ENCODE measurements at regions of chr3 and their contacts with region 1.

Region 1: GRCh38 chr3:42749753-42750231 is 23.3 kb downstream of the CCDC13 start:
- DNase-seq: peak; percentile 33
- H3K4me3 Mint-ChIP-seq: no peak overlapping the region
- H3K27ac Mint-ChIP-seq: no peak overlapping the region
- H3K4me1 Mint-ChIP-seq: peaks cover 8% of the 10 kb centered on the region
- H3K27me3 Mint-ChIP-seq: no peaks in the 10 kb centered on the region
- CTCF ChIP-seq: peak; percentile 50

Region 2: GRCh38 chr3:42581709-42582473 is 167.9 kb before region 1 on chr3 and contains the start of gene SEC22C:
- CTCF ChIA-PET with region 1: interaction called, 8 read pairs
- POLR2A ChIA-PET with region 1: interaction called, 5 read pairs
- intact Hi-C with region 1: loop called (anchors 2 kb)
- DNase-seq: peak; percentile 96
- H3K4me3 Mint-ChIP-seq: peak within 1 kb of the TSS; percentile 78
- H3K27ac Mint-ChIP-seq: peak within 1 kb of the TSS; percentile 66
- H3K4me1 Mint-ChIP-seq: peaks cover 29% of the 10 kb centered on the region
- H3K27me3 Mint-ChIP-seq: no peaks in the 10 kb centered on the region
- CTCF ChIP-seq: peak; percentile 20
- total RNA-seq, gene SEC22C: 52.1 and 55.7 TPM in 2 replicates

Region 3: GRCh38 chr3:42590989-42591756 is 158.6 kb before region 1 on chr3:
- CTCF ChIA-PET with region 1: interaction called, 11 read pairs
- POLR2A ChIA-PET with region 1: interaction called, 3 read pairs
- intact Hi-C with region 1: no loop called
- DNase-seq: no peak
- H3K4me3 Mint-ChIP-seq: peak overlapping the region; percentile 83
- H3K27ac Mint-ChIP-seq: peak overlapping the region; percentile 52
- H3K4me1 Mint-ChIP-seq: peaks cover 14% of the 10 kb centered on the region
- H3K27me3 Mint-ChIP-seq: no peaks in the 10 kb centered on the region
- CTCF ChIP-seq: no peak

Region 4: GRCh38 chr3:42652611-42653302 is 97.0 kb before region 1 on chr3:
- CTCF ChIA-PET with region 1: interaction called, 27 read pairs
- POLR2A ChIA-PET with region 1: interaction called, 5 read pairs
- intact Hi-C with region 1: loop called (anchors 1 kb)
- DNase-seq: peak; percentile 88
- H3K4me3 Mint-ChIP-seq: peak overlapping the region; percentile 90
- H3K27ac Mint-ChIP-seq: peak overlapping the region; percentile 89
- H3K4me1 Mint-ChIP-seq: peaks cover 41% of the 10 kb centered on the region
- H3K27me3 Mint-ChIP-seq: no peaks in the 10 kb centered on the region
- CTCF ChIP-seq: no peak

Region 5: GRCh38 chr3:42763021-42763420 is 13.2 kb after region 1 on chr3:
- CTCF ChIA-PET with region 1: interaction called, 7 read pairs
- POLR2A ChIA-PET with region 1: interaction called, 11 read pairs
- intact Hi-C with region 1: no loop called
- DNase-seq: no peak
- H3K4me3 Mint-ChIP-seq: no peak overlapping the region
- H3K27ac Mint-ChIP-seq: no peak overlapping the region
- H3K4me1 Mint-ChIP-seq: peaks cover 13% of the 10 kb centered on the region
- H3K27me3 Mint-ChIP-seq: no peaks in the 10 kb centered on the region
- CTCF ChIP-seq: no peak

Region 6: GRCh38 chr3:42831321-42831713 is 81.5 kb after region 1 on chr3:
- CTCF ChIA-PET with region 1: interaction called, 6 read pairs
- POLR2A ChIA-PET with region 1: no interaction called
- intact Hi-C with region 1: loop called (anchors 2 kb)
- DNase-seq: peak; percentile 78
- H3K4me3 Mint-ChIP-seq: no peak overlapping the region
- H3K27ac Mint-ChIP-seq: no peak overlapping the region
- H3K4me1 Mint-ChIP-seq: peaks cover 40% of the 10 kb centered on the region
- H3K27me3 Mint-ChIP-seq: no peaks in the 10 kb centered on the region
- CTCF ChIP-seq: peak; percentile 67

Region 7: DNA sequence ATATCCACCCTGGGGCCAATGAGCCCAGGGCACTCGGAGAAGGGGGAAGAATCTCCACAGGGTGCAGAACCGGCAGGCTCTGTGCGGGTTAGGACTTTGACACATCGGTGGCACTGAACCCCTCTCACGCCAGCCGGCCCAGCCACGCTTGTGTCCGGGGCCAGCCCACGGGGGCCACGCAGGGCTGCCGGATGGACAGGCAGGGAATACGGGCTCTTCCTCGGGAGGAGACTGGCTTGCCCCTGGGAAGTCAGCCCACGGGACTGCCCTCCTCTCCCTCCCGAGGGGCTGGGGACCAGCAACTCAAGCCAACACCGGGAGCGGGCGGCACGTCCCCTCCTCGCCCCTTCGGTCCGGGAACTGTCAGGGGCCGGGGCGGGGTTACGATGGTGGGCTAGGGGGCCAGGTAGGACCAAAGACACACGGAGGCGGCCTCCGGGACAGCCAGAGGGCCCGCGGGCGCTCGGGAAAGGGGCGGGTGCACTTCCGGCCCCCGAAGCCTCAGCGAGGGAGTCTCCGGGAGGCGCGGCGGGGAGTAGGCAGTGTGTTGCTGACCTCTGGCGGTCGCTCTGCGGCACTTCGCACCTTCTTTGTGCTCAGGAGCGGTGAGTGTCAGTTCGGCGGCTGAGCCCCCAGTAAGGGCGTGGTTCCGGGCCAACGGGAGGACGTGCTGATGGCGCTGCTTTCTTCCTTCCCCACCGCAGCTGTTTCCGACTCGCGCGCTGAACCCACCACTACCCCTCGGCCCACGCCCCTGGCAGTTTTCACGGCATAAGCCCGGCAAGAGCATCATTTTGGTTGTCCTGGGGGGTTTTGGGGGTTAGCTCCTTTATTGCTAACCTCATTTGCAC is 131.0 kb after region 1 on chr3:
- CTCF ChIA-PET with region 1: interaction called, 3 read pairs
- POLR2A ChIA-PET with region 1: no interaction called
- intact Hi-C with region 1: loop called (anchors 1 kb)
- DNase-seq: peak; percentile 74
- H3K4me3 Mint-ChIP-seq: peak overlapping the region; percentile 63
- H3K27ac Mint-ChIP-seq: peak overlapping the region; percentile 21
- H3K4me1 Mint-ChIP-seq: peaks cover 6% of the 10 kb centered on the region
- H3K27me3 Mint-ChIP-seq: peaks cover 12% of the 10 kb centered on the region
- CTCF ChIP-seq: peak; percentile 88

Measured in MCF 10A (cell line).